Heart left ventricle (tissue), 16 donors: ENCODE measurements at regions of chr20 and their contacts with region 1.

Region 1: DNA sequence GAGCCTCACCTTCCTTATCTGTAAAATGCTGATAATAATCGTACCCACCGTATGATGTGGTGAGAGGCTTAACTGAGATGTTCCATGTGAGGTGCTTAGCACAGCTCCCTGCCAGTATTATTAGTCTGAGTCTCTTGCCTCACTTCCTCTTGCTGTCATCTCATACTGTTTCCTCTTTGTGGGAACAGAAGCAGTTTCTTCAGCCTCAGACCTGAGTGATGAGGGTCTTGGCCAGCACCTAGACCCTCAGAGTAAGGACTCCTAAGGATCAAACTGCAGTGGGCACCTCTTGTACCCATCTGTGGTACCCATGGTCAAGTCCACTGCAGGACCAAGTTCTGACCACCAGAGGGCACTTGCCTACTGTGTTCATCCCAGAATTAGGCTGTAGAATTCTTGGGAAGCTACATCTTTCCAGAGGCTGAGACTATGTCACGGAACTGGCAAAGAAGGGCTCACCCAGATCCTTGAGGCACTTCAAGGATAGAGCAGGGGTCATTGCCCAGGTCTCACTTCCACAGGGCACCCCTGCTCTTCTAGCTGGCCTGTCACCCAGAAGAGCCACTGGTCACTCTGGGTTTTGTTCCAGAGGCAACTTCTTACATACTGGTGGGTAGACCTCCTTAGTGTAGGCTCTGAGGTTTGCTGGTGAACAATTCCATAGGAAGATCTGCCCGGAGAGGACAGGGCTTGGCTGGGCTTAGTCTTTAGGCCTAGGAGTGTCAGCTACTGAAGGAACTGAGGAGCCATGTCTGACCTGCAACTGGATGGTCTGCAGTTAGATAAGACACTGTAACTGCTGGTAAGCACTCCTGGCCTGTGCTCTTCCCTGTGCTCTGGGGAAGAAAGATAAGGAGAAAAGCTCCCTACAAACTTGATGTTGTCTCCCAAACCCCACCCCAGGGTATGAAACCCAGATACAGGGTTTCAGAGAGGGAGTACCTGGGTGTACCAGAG is 20.6 kb upstream of the SGK2 start:
- DNase-seq: peak in 4 of 5 donors; percentile 27 to 48 (median 46)
- ATAC-seq: peak in 3 of 4 donors; percentile 57 to 72 (median 59)
- H3K4me3 ChIP-seq: no peak overlapping the region
- H3K27ac ChIP-seq: no peak overlapping the region
- H3K4me1 ChIP-seq: no peaks in the 10 kb centered on the region
- H3K27me3 ChIP-seq: no peaks in the 10 kb centered on the region
- CTCF ChIP-seq: peak; percentile 75 to 95 (median 86)
- POLR2A ChIP-seq: no peak

Region 2: GRCh38 chr20:43430265-43431133 is 107.7 kb before region 1 on chr20:
- intact Hi-C with region 1: no loop called
- DNase-seq: no peak
- ATAC-seq: no peak
- H3K4me3 ChIP-seq: no peak overlapping the region
- H3K27ac ChIP-seq: no peak overlapping the region
- H3K4me1 ChIP-seq: no peaks in the 10 kb centered on the region
- H3K27me3 ChIP-seq: peaks cover 0 to 8% (median 0%) of the 10 kb centered on the region in 9 donors
- CTCF ChIP-seq: no peak
- POLR2A ChIP-seq: no peak

Region 3: DNA sequence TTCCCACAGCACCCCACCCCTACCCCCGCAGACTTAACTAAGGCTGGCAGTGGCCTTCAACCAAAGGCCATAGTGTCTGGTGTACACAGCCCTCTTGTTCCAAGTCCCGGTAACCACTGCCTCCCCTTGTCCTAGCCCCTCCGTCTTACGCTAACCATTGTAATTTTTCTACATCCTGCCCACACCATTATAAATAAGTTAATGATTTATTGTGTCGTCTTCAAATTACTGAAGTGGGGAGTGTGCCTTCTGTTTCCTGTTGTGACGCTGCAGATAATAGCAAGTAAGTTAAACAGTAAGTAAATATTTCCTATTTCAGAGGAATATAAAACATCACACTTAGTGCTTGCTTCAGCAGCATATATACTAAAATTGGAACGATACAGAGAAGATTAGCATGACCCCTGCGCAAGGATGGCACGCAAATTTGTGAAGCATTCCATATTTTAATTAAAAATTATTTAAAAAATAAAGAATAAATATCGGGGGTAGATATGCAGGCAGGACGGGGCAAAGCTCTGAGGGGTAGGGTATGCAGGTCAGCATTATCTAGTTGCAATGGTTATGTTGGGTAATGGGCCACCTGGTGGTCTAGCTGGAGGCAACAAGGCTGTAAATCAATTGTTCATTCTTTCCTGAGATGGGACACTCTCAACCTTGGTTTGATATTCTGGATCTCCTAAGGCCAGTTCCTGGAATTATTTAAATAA is 65.4 kb before region 1 on chr20:
- intact Hi-C with region 1: no loop called
- DNase-seq: no peak
- ATAC-seq: no peak
- H3K4me3 ChIP-seq: no peak overlapping the region
- H3K27ac ChIP-seq: no peak overlapping the region
- H3K4me1 ChIP-seq: no peaks in the 10 kb centered on the region
- H3K27me3 ChIP-seq: no peaks in the 10 kb centered on the region
- CTCF ChIP-seq: no peak
- POLR2A ChIP-seq: no peak

Region 4: DNA sequence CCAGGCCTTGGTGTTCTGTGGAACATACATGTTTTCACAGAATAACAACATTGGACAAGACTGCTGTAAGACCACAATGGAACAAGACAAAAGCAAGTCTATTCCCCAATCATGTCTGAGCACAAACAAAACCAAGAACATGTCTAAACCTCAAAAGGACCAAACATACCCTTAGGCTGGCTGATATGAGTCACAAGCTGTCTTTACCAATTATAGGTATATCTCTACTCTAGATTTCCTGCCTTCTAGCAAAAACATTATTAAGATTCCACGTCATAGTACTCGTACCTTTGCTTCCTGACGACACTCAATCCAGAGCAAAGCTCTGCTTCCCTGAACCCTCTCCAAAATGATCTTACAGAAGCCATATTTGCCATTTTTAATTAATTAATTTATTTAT is 46.1 kb before region 1 on chr20:
- intact Hi-C with region 1: no loop called
- DNase-seq: no peak
- ATAC-seq: no peak
- H3K4me3 ChIP-seq: no peak overlapping the region
- H3K27ac ChIP-seq: no peak overlapping the region
- H3K4me1 ChIP-seq: no peaks in the 10 kb centered on the region
- H3K27me3 ChIP-seq: no peaks in the 10 kb centered on the region
- CTCF ChIP-seq: no peak
- POLR2A ChIP-seq: no peak

Region 5: GRCh38 chr20:43558412-43559146 is 20.4 kb after region 1 on chr20 and contains the start of gene SGK2:
- intact Hi-C with region 1: no loop called
- DNase-seq: no peak
- ATAC-seq: peak in 1 of 4 donors; percentile 30
- H3K4me3 ChIP-seq: no peak within 1 kb of the TSS
- H3K27ac ChIP-seq: no peak within 1 kb of the TSS
- H3K4me1 ChIP-seq: peaks cover 0 to 3% (median 0%) of the 10 kb centered on the region in 12 donors
- H3K27me3 ChIP-seq: no peaks in the 10 kb centered on the region
- CTCF ChIP-seq: no peak
- POLR2A ChIP-seq: no peak
- total RNA-seq, gene SGK2: 0.17 to 4.5 (median 0.54) TPM in 4 of 9 donors, not detected in the others

Region 6: DNA sequence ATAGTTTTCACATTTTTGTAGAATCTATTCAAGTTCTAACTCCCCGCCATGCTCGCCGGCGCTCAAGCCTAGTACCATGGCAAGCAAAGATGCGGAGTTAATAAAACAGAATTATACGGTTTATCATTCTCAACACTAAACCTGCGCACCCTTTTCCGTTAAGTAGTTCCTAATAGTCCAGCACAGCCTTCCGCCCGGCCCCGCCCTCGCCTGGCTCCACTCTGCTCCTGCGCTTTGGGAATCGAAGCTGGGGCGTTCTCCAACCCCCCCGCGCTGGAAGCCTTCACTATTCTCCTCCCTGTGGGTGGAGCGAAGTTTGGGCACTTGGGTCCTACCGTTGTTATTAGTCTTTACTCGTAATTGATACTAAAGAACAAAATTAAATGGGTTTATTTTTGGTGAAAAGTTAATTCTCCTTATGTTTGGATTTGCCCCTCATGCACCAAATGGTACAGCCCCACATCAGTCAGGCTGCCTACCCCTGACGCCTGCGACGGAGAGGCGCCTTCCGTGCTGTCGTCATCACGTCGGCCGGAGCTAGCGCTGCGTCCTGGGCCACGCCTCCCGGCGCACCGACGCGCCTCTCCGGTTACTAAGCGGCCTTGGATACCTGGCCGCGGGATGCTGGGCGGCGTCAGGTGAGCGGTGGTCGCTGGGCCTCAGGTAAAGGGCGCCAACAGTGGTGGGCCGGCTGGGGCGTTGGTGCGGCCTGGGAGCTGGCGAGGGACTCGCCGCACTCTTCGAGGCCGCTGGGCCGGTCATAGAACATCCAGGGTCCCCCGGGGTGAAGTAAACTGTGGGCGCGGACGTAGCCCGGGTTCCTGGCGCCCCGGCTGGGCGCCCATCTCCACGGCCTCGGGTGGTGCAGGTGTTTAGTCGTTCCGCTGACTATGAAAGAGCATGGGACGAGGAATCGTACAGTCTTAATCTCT is 52.5 kb after region 1 on chr20 and contains the start of gene IFT52:
- intact Hi-C with region 1: loop called in 1 of 10 experiments (anchors 5 kb)
- DNase-seq: peak; percentile 95
- ATAC-seq: peak; percentile 99 to 100 (median 100)
- H3K4me3 ChIP-seq: peak within 1 kb of the TSS; percentile 68 to 99 (median 85)
- H3K27ac ChIP-seq: peak within 1 kb of the TSS; percentile 66 to 94 (median 88)
- H3K4me1 ChIP-seq: peaks cover 3 to 22% (median 13%) of the 10 kb centered on the region in 12 donors
- H3K27me3 ChIP-seq: no peaks in the 10 kb centered on the region
- CTCF ChIP-seq: no peak
- POLR2A ChIP-seq: peak in 1 of 2 donors; percentile 49
- total RNA-seq, gene IFT52: 4.2 to 15.5 (median 5.7) TPM

Region 7: DNA sequence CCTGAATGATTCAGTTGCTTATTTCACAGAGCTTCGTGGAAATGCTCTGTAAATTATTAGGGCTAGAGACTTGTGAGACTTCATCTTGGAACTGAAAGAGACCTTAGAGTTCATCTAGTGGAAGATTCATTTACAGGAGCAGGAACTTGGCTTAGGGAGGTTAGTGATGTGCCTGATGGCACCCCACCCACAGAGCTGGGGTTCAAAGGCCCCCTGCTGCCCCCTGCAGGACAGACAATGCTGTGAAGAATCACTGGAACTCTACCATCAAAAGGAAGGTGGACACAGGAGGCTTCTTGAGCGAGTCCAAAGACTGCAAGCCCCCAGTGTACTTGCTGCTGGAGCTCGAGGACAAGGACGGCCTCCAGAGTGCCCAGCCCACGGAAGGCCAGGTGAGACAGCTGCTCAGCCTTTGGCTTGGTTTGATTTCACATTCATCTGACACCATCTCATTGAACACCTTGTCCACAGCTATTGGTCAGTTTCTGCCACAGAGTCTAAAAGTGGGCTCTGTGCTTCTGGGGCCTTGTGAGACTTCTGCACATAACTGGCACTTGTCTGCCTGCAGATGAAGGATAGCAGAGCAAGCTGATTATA is 153.8 kb after region 1 on chr20:
- intact Hi-C with region 1: loop called in 2 of 10 experiments (anchors 5 kb)
- DNase-seq: no peak
- ATAC-seq: no peak
- H3K4me3 ChIP-seq: no peak overlapping the region
- H3K27ac ChIP-seq: no peak overlapping the region
- H3K4me1 ChIP-seq: no peaks in the 10 kb centered on the region
- H3K27me3 ChIP-seq: no peaks in the 10 kb centered on the region
- CTCF ChIP-seq: peak in 10 of 12 donors; percentile 10 to 52 (median 39)
- POLR2A ChIP-seq: no peak

Region 8: DNA sequence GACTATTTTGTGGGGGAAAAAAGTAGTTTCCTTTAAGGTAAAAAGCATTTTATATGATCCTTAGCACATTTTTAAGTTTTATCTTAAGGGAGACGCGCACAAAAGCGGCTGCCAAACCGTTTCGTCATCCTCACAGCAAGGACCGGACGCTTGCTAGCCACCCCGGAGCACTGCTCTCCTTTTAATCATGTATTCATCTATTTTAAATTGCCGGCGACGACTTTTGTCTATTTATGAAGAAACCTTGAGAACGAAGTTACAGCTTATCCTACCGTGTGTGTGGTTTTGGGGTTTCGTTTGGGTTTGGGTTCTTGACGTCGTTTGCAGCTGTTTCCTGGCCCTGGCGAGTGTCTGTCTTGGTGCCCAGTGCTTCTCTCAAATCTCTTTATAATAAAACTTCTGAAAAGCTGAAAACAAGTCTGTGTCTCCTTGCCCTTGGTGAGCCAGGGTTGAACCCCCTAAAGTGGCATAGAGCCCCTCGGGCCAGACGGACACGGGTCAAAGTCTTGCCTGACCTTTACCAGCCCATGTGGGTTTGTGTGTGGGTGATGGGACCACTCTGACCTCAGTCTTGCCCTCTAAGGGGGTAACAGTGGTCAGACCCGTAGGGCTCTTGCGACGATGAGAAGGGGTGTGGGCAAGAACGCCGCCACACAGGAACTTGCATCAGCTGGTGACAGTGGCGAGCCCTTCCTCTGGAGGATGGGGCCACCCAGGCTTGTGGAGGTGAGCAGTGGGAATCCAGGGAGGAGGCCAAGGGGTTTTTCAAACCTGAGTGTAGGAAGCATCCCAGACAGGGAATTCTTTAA is 531.2 kb after region 1 on chr20:
- intact Hi-C with region 1: loop called in 1 of 10 experiments (anchors 10 kb)
- DNase-seq: peak in 1 of 5 donors; percentile 28
- ATAC-seq: peak in 1 of 4 donors; percentile 11
- H3K4me3 ChIP-seq: peak overlapping the region in 1 of 12 donors; percentile 34
- H3K27ac ChIP-seq: peak overlapping the region in 1 of 12 donors; percentile 76
- H3K4me1 ChIP-seq: peaks cover 0 to 32% (median 0%) of the 10 kb centered on the region in 12 donors
- H3K27me3 ChIP-seq: peaks cover 0 to 7% (median 0%) of the 10 kb centered on the region in 9 donors
- CTCF ChIP-seq: no peak
- POLR2A ChIP-seq: no peak

Region 9: DNA sequence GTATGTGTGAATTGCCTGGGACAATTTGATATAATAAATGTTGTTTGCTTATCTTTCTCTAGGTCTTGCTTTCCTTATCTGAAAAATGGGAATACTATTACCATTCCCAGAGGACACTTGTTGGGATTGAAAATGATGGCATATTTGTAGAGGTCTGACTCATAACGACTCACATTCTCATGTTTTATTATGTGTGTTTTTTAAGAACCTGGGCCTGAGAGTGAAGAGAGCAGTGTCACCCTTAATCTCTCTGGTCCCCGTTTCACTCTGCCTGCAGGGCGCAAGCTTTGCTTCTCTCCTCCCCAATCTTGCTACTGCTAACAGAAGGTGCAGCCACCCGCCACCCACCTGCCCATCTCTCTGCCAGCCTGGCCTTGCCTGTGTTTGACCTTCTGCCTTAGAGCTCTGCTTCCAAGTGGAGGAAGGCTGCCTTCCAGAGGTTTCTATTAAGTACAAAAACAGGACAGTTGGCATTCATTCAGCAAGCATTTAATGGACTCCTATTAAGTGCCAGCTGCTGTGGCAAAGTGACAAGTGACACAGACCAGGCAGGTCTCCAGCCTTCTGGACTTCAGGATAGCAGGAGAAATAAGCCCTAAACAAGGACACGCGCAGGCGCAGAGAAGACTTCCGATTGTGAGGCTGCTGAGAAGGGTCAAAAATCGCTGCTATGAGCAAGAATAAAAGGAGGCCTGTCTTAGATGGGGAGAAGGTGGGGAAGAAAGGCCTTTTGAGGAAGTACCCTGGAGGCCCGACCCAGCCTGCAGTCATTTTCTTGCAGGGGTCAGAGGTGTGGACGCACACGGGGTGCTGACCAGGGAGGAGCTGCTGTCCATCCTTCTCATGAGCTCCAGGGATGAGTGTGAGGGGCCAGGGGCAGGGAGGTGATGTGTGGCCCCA is 536.3 kb after region 1 on chr20:
- intact Hi-C with region 1: loop called in 2 of 10 experiments (anchors 5 to 10 kb)
- DNase-seq: peak; percentile 41 to 88 (median 77)
- ATAC-seq: peak; percentile 88 to 94 (median 92)
- H3K4me3 ChIP-seq: no peak overlapping the region
- H3K27ac ChIP-seq: peak overlapping the region in 10 of 12 donors; percentile 6 to 62 (median 48)
- H3K4me1 ChIP-seq: peaks cover 0 to 25% (median 1%) of the 10 kb centered on the region in 12 donors
- H3K27me3 ChIP-seq: peaks cover 0 to 7% (median 0%) of the 10 kb centered on the region in 9 donors
- CTCF ChIP-seq: no peak
- POLR2A ChIP-seq: no peak

Region 10: DNA sequence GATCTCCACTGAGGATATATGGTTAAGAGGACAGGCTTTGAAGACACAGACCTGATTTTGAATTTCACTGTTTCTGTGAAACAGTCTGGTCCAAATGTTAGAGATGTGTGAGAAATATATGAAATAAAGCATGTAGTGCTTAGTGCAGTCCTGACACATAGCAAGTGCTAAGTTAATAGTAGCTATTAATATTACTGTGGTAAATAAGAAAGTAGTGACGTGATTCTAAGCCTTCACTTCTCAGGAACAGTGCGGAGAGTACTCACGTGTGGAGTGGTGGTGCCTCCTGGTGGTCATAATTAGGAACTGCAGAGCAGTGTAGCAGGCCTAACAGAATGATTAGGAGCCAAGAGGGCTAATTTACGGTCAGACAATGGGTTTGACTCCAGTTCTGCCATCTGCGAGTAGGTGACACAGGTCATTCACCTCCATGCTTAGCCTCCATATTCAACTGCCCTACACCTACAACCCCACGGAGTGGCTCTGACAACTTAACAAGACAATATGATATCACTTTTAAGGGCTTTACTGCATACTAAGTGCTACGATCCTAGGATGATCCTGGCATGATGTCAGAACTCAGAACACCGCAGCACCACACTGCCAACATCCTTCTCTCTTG is 542.6 kb after region 1 on chr20:
- intact Hi-C with region 1: loop called in 8 of 10 experiments (anchors 2 to 10 kb)
- DNase-seq: peak; percentile 51 to 73 (median 59)
- ATAC-seq: peak; percentile 56 to 86 (median 80)
- H3K4me3 ChIP-seq: no peak overlapping the region
- H3K27ac ChIP-seq: no peak overlapping the region
- H3K4me1 ChIP-seq: peaks cover 0 to 19% (median 1%) of the 10 kb centered on the region in 12 donors
- H3K27me3 ChIP-seq: no peaks in the 10 kb centered on the region
- CTCF ChIP-seq: peak; percentile 95 to 99 (median 99)
- POLR2A ChIP-seq: no peak

Region 11: GRCh38 chr20:44089987-44090674 is 551.9 kb after region 1 on chr20:
- intact Hi-C with region 1: loop called in 1 of 10 experiments (anchors 5 kb)
- DNase-seq: no peak
- ATAC-seq: no peak
- H3K4me3 ChIP-seq: no peak overlapping the region
- H3K27ac ChIP-seq: no peak overlapping the region
- H3K4me1 ChIP-seq: peaks cover 0 to 6% (median 0%) of the 10 kb centered on the region in 12 donors
- H3K27me3 ChIP-seq: peaks cover 0 to 19% (median 0%) of the 10 kb centered on the region in 9 donors
- CTCF ChIP-seq: no peak
- POLR2A ChIP-seq: no peak